ENCODE measurements at regions of chr9 and their contacts with region 1.

Region 1: DNA sequence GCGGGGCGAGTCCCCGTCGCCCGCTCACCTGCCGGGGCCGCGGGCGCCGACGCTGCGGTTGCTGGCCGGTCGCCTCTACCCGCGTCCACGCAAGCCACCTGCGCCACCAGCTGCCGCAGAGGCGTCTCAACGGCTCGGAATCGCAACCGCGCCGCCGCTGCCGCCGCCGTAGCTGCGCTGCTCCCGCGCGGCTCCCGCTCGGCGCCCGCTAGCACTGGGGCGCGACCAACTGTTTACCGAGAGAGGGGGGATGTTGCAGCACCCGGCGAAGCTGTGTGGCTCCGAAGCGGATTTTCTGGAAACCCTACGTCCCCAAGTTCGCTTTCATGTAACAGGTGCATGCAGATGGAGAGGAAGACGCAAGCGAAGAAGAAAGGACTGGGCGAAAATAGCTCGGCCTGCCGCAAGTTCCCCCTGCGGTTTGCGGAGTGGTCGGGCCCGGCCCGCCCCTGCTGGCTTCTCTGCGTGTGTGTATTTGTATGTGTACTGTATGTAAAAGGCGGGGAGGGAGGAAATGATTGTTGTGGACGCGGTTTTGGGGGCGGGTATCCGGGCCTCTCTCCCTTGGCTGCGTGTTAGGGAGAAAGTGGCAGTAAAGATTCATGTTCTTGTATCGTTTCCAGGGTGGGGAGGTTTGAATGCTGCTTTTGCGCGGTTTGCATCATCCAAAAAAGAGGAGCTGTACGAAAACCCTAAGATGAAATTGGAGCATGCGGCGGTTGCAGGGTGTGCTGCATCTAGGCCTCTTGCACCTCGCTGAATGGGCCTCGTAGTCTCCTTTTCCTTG is at the start of gene PSIP1:
- DNase-seq: peak; percentile 77 to 93 (median 85)
- ATAC-seq: peak; percentile 83
- H3K4me3 ChIP-seq: peak within 1 kb of the TSS; percentile 87 to 93
- H3K4me3 Mint-ChIP-seq: peak within 1 kb of the TSS; percentile 89
- H3K27ac ChIP-seq: peak within 1 kb of the TSS; percentile 91 to 98
- H3K27ac Mint-ChIP-seq: peak within 1 kb of the TSS; percentile 100
- H3K4me1 ChIP-seq: peaks cover 46% of the 10 kb centered on the region
- H3K4me1 Mint-ChIP-seq: peaks cover 51% of the 10 kb centered on the region
- H3K27me3 ChIP-seq: no peaks in the 10 kb centered on the region
- H3K27me3 Mint-ChIP-seq: no peaks in the 10 kb centered on the region
- CTCF ChIP-seq: no peak
- total RNA-seq, gene PSIP1: 93.5 to 96.0 TPM

Region 2: DNA sequence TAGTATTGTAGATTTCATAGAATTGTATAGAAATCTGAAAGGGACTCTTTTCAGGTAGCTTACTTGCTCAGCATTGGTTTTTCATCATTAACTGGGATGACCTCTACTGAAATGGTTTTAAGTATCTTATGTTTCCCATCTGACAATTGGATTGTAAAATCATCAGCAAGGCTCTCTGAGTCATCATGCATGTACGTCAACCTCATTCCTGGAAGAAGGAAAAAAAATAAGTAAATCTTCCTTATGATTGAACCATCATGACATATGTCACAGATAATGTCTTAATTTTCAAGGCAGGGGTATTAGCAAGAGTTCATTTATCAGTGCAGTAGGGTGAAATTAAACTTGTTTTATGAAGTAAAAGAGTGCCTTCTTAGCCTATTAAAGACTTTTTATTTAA is 713.5 kb before region 1 on chr9:
- CTCF ChIA-PET with region 1: no interaction called
- POLR2A ChIA-PET with region 1: no interaction called
- intact Hi-C with region 1: no loop called
- DNase-seq: no peak
- ATAC-seq: no peak
- H3K4me3 ChIP-seq: no peak overlapping the region
- H3K4me3 Mint-ChIP-seq: no peak overlapping the region
- H3K27ac ChIP-seq: no peak overlapping the region
- H3K27ac Mint-ChIP-seq: no peak overlapping the region
- H3K4me1 ChIP-seq: no peaks in the 10 kb centered on the region
- H3K4me1 Mint-ChIP-seq: no peaks in the 10 kb centered on the region
- H3K27me3 ChIP-seq: no peaks in the 10 kb centered on the region
- H3K27me3 Mint-ChIP-seq: peaks cover 3% of the 10 kb centered on the region
- CTCF ChIP-seq: no peak

Region 3: GRCh38 chr9:15295761-15296405 is 215.1 kb before region 1 on chr9:
- CTCF ChIA-PET with region 1: no interaction called
- POLR2A ChIA-PET with region 1: interaction called, 5 read pairs
- intact Hi-C with region 1: loop called (anchors 2 to 5 kb)
- DNase-seq: peak in 2 of 9 experiments; percentile 63 to 82
- ATAC-seq: peak; percentile 15
- H3K4me3 ChIP-seq: peak overlapping the region; percentile 44 to 48
- H3K4me3 Mint-ChIP-seq: peak overlapping the region; percentile 81
- H3K27ac ChIP-seq: peak overlapping the region; percentile 74 to 95
- H3K27ac Mint-ChIP-seq: peak overlapping the region; percentile 94
- H3K4me1 ChIP-seq: peaks cover 79% of the 10 kb centered on the region
- H3K4me1 Mint-ChIP-seq: peaks cover 87% of the 10 kb centered on the region
- H3K27me3 ChIP-seq: no peaks in the 10 kb centered on the region
- H3K27me3 Mint-ChIP-seq: no peaks in the 10 kb centered on the region
- CTCF ChIP-seq: no peak

Region 4: GRCh38 chr9:15422372-15423230 is 88.4 kb before region 1 on chr9 and contains the start of gene SNAPC3:
- CTCF ChIA-PET with region 1: no interaction called
- POLR2A ChIA-PET with region 1: interaction called, 21 read pairs
- intact Hi-C with region 1: loop called (anchors 1 to 2 kb)
- DNase-seq: peak; percentile 85 to 96 (median 92)
- ATAC-seq: peak; percentile 95
- H3K4me3 ChIP-seq: peak within 1 kb of the TSS; percentile 65 to 83
- H3K4me3 Mint-ChIP-seq: peak within 1 kb of the TSS; percentile 91
- H3K27ac ChIP-seq: peak within 1 kb of the TSS; percentile 64 to 67
- H3K27ac Mint-ChIP-seq: peak within 1 kb of the TSS; percentile 87
- H3K4me1 ChIP-seq: peaks cover 22% of the 10 kb centered on the region
- H3K4me1 Mint-ChIP-seq: peaks cover 38% of the 10 kb centered on the region
- H3K27me3 ChIP-seq: no peaks in the 10 kb centered on the region
- H3K27me3 Mint-ChIP-seq: no peaks in the 10 kb centered on the region
- CTCF ChIP-seq: no peak
- total RNA-seq, gene SNAPC3: 3.4 to 5.0 TPM

Region 5: DNA sequence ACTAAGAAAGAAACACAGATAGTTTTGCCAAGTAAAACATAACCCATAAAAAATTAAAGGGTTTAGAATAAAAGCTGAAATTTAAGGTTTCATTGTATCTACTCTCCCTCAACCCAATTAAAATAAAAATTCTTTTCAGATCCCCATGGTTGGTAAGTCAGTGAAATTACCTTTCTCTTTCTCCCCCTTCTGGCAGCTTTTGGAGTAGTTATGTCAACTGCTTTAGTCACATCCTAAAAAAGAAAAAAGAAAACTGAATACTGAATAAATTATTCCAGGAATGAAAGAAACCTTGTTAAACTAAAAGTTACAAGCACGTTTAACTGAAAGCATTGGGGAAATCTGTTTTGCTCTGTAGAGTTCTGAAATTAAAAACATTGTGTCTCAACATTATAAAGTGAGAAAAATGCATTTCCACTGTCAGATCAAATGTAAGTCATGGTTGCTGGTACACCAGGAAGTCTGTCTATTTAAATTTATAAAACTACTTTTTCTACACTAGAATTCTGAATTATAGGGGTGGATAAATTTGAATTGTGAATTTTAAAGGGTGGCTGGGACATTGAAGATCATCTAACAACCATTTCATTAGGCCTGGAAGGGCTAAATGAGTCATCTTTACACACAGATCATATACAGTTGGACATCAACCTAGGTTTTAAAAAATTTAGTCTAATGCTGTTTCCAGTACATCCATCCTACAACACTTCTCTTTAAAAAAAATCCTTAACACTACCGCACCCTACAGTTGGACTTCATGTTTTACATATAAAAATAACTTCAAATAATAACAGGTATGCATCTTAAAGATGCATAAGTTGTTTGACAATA is 24.9 kb before region 1 on chr9:
- CTCF ChIA-PET with region 1: interaction called, 3 read pairs
- POLR2A ChIA-PET with region 1: interaction called, 16 read pairs
- intact Hi-C with region 1: no loop called
- DNase-seq: peak in 2 of 9 experiments; percentile 31 to 51
- ATAC-seq: no peak
- H3K4me3 ChIP-seq: no peak overlapping the region
- H3K4me3 Mint-ChIP-seq: no peak overlapping the region
- H3K27ac ChIP-seq: no peak overlapping the region
- H3K27ac Mint-ChIP-seq: no peak overlapping the region
- H3K4me1 ChIP-seq: no peaks in the 10 kb centered on the region
- H3K4me1 Mint-ChIP-seq: peaks cover 48% of the 10 kb centered on the region
- H3K27me3 ChIP-seq: no peaks in the 10 kb centered on the region
- H3K27me3 Mint-ChIP-seq: no peaks in the 10 kb centered on the region
- CTCF ChIP-seq: peak; percentile 61

Region 6: DNA sequence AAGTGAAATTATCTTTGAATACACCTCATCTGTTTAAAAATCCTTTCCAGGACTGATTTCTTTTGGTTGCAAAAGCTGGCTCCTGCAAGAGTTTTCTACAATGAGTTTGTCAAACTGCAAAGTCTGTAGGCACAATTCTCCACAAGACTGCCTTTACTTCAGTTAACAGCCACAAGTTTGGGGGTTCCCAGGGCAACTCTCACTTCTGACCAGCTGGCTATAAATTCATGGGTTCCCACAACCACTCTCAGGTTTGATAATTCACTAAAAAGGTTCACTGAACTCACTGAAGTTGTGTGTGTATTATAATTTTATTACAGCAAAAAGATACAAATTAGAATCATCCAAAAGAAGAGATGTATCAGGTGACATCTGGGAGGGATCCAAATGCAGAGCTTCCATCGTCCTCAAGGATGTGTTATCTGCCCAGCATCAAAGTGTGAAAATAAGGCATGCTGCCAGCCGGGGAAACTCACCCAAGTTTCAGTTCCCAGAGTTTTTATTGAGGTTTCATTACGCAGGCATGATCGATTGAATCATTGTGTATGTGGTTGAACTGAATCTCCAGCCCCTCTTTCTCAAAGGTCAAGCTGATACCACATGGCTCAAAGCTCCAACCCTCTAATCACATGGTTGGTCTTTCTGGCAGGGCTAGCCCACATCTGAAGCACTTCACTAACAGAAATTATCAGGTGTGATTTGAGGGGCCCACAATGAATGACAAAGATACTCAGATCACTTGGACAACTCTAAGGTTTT is 18.8 kb after region 1 on chr9:
- CTCF ChIA-PET with region 1: interaction called, 4 read pairs
- POLR2A ChIA-PET with region 1: interaction called, 8 read pairs
- intact Hi-C with region 1: loop called in 1 of 2 experiments (anchors 1 kb)
- DNase-seq: no peak
- ATAC-seq: no peak
- H3K4me3 ChIP-seq: no peak overlapping the region
- H3K4me3 Mint-ChIP-seq: no peak overlapping the region
- H3K27ac ChIP-seq: no peak overlapping the region
- H3K27ac Mint-ChIP-seq: no peak overlapping the region
- H3K4me1 ChIP-seq: peaks cover 5% of the 10 kb centered on the region
- H3K4me1 Mint-ChIP-seq: peaks cover 9% of the 10 kb centered on the region
- H3K27me3 ChIP-seq: no peaks in the 10 kb centered on the region
- H3K27me3 Mint-ChIP-seq: peaks cover 3% of the 10 kb centered on the region
- CTCF ChIP-seq: no peak

Region 7: GRCh38 chr9:15606643-15607472 is 95.9 kb after region 1 on chr9:
- CTCF ChIA-PET with region 1: interaction called, 8 read pairs
- POLR2A ChIA-PET with region 1: no interaction called
- intact Hi-C with region 1: loop called in 1 of 2 experiments (anchors 2 kb)
- DNase-seq: peak in 3 of 9 experiments; percentile 18 to 62 (median 52)
- ATAC-seq: no peak
- H3K4me3 ChIP-seq: no peak overlapping the region
- H3K4me3 Mint-ChIP-seq: no peak overlapping the region
- H3K27ac ChIP-seq: no peak overlapping the region
- H3K27ac Mint-ChIP-seq: no peak overlapping the region
- H3K4me1 ChIP-seq: no peaks in the 10 kb centered on the region
- H3K4me1 Mint-ChIP-seq: peaks cover 2% of the 10 kb centered on the region
- H3K27me3 ChIP-seq: no peaks in the 10 kb centered on the region
- H3K27me3 Mint-ChIP-seq: no peaks in the 10 kb centered on the region
- CTCF ChIP-seq: peak; percentile 89

Measured in CD8-positive, alpha-beta T cell (primary cell).